ENCODE measurements at regions of chr2 and their contacts with region 1.

Region 1: DNA sequence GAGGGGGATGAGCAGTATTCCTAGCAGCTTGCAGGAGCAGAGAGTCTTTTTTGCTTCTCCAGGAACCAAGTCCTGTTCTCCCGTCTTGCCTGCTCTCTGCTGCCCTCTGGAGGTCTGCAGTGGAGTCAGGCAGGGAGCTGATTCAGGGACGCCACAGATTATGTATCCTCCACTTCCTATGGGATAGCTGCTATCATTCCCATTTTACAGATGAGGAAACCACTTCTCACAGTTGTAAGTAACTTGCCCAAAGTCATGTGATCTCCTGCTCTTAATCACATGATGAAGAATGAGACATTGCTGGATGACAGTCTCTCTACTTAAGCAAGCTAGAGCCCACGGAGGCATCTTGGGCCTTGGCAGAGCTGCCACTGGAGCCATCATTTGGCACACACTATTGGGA is 8.3 kb downstream of the SLC4A5 start:
- DNase-seq: peak; percentile 74
- H3K4me3 ChIP-seq: peak overlapping the region in 1 of 2 experiments; percentile 32; a peak in 1 of 4 replicates
- H3K27ac ChIP-seq: no peak overlapping the region
- H3K4me1 ChIP-seq: no peaks in the 10 kb centered on the region
- H3K27me3 ChIP-seq: no peaks in the 10 kb centered on the region
- CTCF ChIP-seq: peak; percentile 87
- EP300 ChIP-seq: no peak
- RAD21 ChIP-seq: peak; percentile 82

Region 2: DNA sequence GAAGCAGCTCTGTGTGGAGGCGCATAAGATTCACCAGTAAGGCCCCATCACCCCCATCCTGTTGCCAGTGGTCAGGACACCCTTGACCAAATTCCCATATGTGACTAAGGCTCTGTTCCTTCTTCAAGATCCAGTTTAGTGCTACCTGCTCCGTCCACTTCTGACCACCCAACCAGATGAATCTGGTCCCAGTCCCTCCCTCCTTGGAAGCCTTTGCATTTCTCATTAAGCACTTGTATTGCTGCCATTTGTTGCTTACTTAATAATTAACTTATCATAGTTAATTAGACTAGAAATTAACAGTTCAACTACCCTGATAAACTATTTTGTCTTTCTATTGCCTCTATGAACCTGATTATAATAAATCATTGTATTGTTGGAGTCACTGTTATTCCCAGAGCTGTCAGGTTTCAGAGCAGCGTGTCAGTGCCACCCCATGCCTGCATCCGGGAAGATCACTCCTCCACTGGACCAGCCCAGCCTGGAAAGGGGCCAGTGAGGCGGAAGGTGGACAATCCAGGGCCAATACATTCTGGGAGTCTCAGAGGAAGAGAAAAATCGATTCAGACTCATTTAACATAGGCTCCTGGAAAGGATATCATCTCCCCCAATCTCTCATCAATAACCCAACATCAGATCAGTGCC is 683.2 kb before region 1 on chr2:
- CTCF ChIA-PET with region 1: no interaction called
- POLR2A ChIA-PET with region 1: no interaction called
- DNase-seq: no peak
- H3K4me3 ChIP-seq: no peak overlapping the region
- H3K27ac ChIP-seq: no peak overlapping the region
- H3K4me1 ChIP-seq: no peaks in the 10 kb centered on the region
- H3K27me3 ChIP-seq: no peaks in the 10 kb centered on the region
- CTCF ChIP-seq: no peak
- EP300 ChIP-seq: no peak
- RAD21 ChIP-seq: no peak

Region 3: GRCh38 chr2:73828818-73829570 is 505.9 kb before region 1 on chr2 and contains the start of gene STAMBP:
- CTCF ChIA-PET with region 1: interaction called, 49 read pairs
- POLR2A ChIA-PET with region 1: interaction called, 3 read pairs
- DNase-seq: peak; percentile 94
- H3K4me3 ChIP-seq: peak within 1 kb of the TSS; percentile 86 to 96
- H3K27ac ChIP-seq: peak within 1 kb of the TSS; percentile 87 to 88
- H3K4me1 ChIP-seq: peaks cover 14 to 19% of the 10 kb centered on the region in 2 experiments; a peak in 3 of 4 replicates
- H3K27me3 ChIP-seq: no peaks in the 10 kb centered on the region
- CTCF ChIP-seq: no peak
- EP300 ChIP-seq: no peak
- RAD21 ChIP-seq: no peak
- polyA plus RNA-seq, gene STAMBP: 42.2 and 54.5 TPM in 2 replicates

Region 4: DNA sequence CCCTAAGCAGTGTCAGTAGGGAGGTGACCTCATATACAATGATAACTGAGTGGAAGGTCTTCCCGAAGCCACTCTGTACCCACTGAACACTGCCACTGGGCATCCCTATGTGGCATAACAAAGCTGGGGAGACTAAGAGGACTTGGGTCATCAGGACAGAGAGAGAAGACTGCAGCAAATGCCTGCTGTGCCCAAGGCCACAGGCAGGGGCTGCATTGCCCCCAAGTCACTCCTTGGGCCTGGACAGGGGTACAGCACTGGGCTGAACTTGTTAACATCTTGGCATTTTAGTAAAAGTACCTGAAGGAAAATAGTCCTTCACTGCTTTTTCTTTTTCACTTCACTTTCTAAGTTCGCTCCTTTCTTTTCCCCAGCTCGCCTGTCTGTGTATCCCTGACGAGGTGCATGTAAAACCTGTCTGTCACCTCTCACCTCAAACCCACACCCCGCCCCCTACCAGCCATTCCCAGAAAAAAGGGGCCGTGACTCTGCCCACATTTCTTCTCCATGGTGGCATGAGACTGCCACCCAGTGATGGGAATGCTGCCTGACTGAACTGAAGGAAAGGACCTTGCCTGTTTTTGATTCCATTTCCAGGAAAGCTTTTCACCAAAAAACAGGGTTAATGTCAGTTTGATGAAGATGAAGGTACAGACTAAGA is 73.6 kb before region 1 on chr2:
- CTCF ChIA-PET with region 1: interaction called, 13 read pairs
- POLR2A ChIA-PET with region 1: no interaction called
- DNase-seq: peak; percentile 61
- H3K4me3 ChIP-seq: no peak overlapping the region; a peak in 1 of 4 replicates
- H3K27ac ChIP-seq: no peak overlapping the region
- H3K4me1 ChIP-seq: no peaks in the 10 kb centered on the region
- H3K27me3 ChIP-seq: no peaks in the 10 kb centered on the region
- CTCF ChIP-seq: peak; percentile 61
- EP300 ChIP-seq: no peak
- RAD21 ChIP-seq: peak; percentile 70

Region 5: GRCh38 chr2:74307720-74308119 is 27.2 kb before region 1 on chr2:
- CTCF ChIA-PET with region 1: interaction called, 21 read pairs
- POLR2A ChIA-PET with region 1: no interaction called
- DNase-seq: no peak
- H3K4me3 ChIP-seq: no peak overlapping the region
- H3K27ac ChIP-seq: no peak overlapping the region
- H3K4me1 ChIP-seq: no peaks in the 10 kb centered on the region; a peak in 1 of 4 replicates
- H3K27me3 ChIP-seq: no peaks in the 10 kb centered on the region
- CTCF ChIP-seq: no peak
- EP300 ChIP-seq: no peak
- RAD21 ChIP-seq: no peak

Region 6: DNA sequence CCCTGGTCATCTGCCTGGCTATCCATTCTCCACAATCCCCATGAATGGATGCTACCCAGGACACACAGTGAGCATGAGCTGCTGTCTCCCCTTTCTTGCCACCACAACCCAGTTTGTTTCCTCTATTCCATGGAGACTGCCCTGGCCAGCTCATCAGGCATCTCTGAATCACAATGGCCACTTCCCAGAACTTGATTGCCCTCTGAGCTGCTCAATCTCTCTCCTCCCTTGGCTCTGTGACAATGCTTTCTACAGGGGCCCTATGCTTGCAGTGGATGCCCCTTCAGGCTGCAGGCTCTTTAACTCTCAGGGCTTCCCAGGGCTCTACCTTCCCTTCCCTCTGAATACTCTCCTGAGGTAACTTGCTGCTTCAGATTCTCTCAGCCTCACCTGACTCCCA is 22.7 kb after region 1 on chr2:
- CTCF ChIA-PET with region 1: interaction called, 35 read pairs
- POLR2A ChIA-PET with region 1: no interaction called
- DNase-seq: no peak
- H3K4me3 ChIP-seq: no peak overlapping the region
- H3K27ac ChIP-seq: no peak overlapping the region
- H3K4me1 ChIP-seq: no peaks in the 10 kb centered on the region
- H3K27me3 ChIP-seq: no peaks in the 10 kb centered on the region
- CTCF ChIP-seq: no peak
- EP300 ChIP-seq: no peak
- RAD21 ChIP-seq: no peak

Region 7: GRCh38 chr2:74379851-74380789 is 45.2 kb after region 1 on chr2 and contains the start of gene DCTN1:
- CTCF ChIA-PET with region 1: interaction called, 11 read pairs
- POLR2A ChIA-PET with region 1: no interaction called
- DNase-seq: peak; percentile 83
- H3K4me3 ChIP-seq: peak within 1 kb of the TSS; percentile 46 to 47
- H3K27ac ChIP-seq: peak within 1 kb of the TSS; percentile 37 to 62; a peak in 3 of 4 replicates
- H3K4me1 ChIP-seq: peaks cover 7 to 20% of the 10 kb centered on the region in 2 experiments; a peak in 2 of 4 replicates
- H3K27me3 ChIP-seq: no peaks in the 10 kb centered on the region
- CTCF ChIP-seq: no peak
- EP300 ChIP-seq: no peak
- RAD21 ChIP-seq: no peak
- polyA plus RNA-seq, gene DCTN1: 88.9 and 91.1 TPM in 2 replicates

Region 8: GRCh38 chr2:74587664-74588277 is 252.8 kb after region 1 on chr2:
- CTCF ChIA-PET with region 1: interaction called, 14 read pairs
- POLR2A ChIA-PET with region 1: no interaction called
- DNase-seq: peak; percentile 76
- H3K4me3 ChIP-seq: peak overlapping the region in 1 of 2 experiments; percentile 22; a peak in 1 of 4 replicates
- H3K27ac ChIP-seq: peak overlapping the region in 1 of 2 experiments; percentile 40; a peak in 1 of 4 replicates
- H3K4me1 ChIP-seq: peaks cover 4 to 13% of the 10 kb centered on the region in 2 experiments; a peak in 2 of 4 replicates
- H3K27me3 ChIP-seq: no peaks in the 10 kb centered on the region
- CTCF ChIP-seq: peak; percentile 85
- EP300 ChIP-seq: no peak
- RAD21 ChIP-seq: peak; percentile 97